SK-N-SH (cell line): ENCODE measurements at regions of chr12 and their contacts with region 1.

Region 1: GRCh38 chr12:66269757-66270383 is 32.4 kb upstream of the HELB start:
- DNase-seq: peak; percentile 45
- H3K4me3 ChIP-seq: no peak overlapping the region
- H3K27ac ChIP-seq: no peak overlapping the region
- H3K4me1 ChIP-seq: no peaks in the 10 kb centered on the region; a peak in 1 of 4 replicates
- H3K27me3 ChIP-seq: no peaks in the 10 kb centered on the region; the same call in 1 of the 2 replicates
- CTCF ChIP-seq: peak; percentile 82
- EP300 ChIP-seq: no peak
- RAD21 ChIP-seq: peak; percentile 74

Region 2: DNA sequence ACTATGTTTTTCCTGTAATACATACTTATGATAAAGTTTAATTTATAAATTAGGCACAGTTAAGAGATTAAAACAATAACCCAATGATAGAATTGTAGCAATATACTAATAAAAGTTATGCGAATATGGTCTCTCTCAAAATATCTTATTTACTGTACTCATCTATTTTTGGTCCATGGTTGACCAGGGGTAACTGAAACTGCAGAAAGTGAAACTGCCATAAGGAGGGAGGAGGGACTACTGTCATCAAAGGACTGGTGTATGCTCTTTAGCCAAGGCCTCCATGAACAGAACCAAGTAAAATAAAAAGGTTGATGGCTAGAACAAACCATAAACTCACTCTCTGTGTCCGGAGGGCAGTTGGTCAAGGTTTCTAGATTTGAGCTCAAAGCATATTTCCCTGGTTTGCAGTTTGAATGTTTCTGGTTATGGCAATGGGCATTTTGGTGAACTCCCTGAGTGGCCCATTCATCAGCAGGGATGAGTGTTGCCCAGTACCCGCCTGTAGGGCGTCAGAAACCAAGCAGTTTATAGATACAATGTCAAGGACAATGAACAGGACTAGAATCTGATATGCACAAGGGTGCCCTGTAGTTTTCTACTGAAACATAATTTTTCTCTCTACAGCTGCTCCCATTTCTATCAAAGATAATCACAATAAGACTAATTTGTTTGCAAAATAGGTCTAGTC is 1080.7 kb before region 1 on chr12:
- CTCF ChIA-PET with region 1: no interaction called
- POLR2A ChIA-PET with region 1: no interaction called
- DNase-seq: no peak
- H3K4me3 ChIP-seq: no peak overlapping the region
- H3K27ac ChIP-seq: no peak overlapping the region
- H3K4me1 ChIP-seq: no peaks in the 10 kb centered on the region; a peak in 1 of 4 replicates
- H3K27me3 ChIP-seq: no peaks in the 10 kb centered on the region
- CTCF ChIP-seq: no peak
- EP300 ChIP-seq: no peak
- RAD21 ChIP-seq: no peak

Region 3: DNA sequence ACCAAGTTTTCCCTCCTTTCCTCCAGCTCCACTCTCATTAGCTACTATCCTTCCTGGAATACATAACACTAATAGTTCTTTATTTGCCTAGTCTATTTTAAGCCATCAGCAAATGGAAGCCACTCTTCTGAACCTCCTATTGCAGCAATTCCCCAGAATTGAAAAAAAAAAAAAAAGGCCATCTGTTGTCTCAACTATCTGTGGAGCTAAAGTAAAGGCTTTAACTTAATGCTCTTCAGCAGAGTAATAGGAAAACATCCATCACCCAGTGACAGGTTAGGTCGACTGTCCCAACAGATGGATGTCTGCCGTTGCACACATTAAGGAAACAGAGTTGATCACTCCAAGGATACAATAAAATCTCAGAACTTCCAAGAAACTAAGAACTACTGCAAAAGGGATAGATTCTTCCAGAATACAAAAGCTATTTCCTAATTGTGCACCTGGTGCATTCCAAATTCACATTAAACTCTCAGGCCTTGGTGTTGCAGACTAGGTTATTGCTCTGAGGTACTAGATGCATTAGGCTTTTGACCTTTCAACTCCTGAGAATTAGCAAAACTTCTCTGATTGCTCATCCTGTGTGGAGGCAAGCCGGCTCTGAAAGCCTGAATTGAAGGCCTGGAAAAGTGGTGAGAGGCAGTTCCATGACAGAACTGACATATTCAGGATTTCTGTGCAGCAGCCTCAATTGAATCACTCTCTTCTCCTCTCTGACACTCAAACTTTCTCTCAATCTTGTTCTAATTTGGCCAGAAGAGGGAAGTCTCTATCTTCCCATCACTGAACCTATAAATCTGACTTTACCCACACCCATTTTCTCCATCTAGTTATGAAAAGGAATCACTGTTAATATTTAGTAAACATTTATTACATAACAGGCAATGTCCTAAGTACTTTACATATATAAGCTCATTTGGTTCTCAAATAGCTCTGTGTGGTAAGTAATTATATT is 683.9 kb before region 1 on chr12:
- CTCF ChIA-PET with region 1: no interaction called
- POLR2A ChIA-PET with region 1: no interaction called
- DNase-seq: no peak
- H3K4me3 ChIP-seq: no peak overlapping the region
- H3K27ac ChIP-seq: peak overlapping the region; percentile 51 to 73; a peak in 3 of 4 replicates
- H3K4me1 ChIP-seq: peaks cover 0 to 22% of the 10 kb centered on the region in 2 experiments; a peak in 1 of 4 replicates
- H3K27me3 ChIP-seq: no peaks in the 10 kb centered on the region
- CTCF ChIP-seq: 0 out of 2 replicates have a peak, but pooled peaks have one; percentile 7
- EP300 ChIP-seq: peak; percentile 9 to 11; a peak in 1 of 4 replicates
- RAD21 ChIP-seq: no peak

Region 4: DNA sequence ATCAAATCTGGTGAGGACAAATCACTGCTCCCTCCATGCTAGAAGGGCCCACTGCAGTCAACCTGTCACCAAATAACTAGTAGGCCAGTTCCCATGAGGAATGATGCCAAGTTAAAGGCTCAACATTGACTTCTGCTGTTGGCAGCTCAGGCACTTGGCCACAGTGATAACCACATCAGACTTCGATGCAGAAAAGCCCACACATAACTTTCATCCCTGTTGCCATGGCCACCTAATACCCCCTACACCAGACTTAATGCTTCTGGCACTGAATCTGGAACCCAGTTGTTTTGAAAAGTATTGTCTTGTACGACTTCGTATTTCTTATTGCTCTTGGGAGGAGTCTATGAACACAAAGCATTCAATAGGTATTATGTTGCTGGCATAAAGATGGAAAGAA is 11.9 kb before region 1 on chr12:
- CTCF ChIA-PET with region 1: interaction called, 15 read pairs
- POLR2A ChIA-PET with region 1: no interaction called
- DNase-seq: no peak
- H3K4me3 ChIP-seq: no peak overlapping the region
- H3K27ac ChIP-seq: no peak overlapping the region
- H3K4me1 ChIP-seq: no peaks in the 10 kb centered on the region; a peak in 1 of 4 replicates
- H3K27me3 ChIP-seq: peaks cover 9% of the 10 kb centered on the region; the same call in 1 of the 2 replicates
- CTCF ChIP-seq: no peak
- EP300 ChIP-seq: no peak
- RAD21 ChIP-seq: no peak

Region 5: DNA sequence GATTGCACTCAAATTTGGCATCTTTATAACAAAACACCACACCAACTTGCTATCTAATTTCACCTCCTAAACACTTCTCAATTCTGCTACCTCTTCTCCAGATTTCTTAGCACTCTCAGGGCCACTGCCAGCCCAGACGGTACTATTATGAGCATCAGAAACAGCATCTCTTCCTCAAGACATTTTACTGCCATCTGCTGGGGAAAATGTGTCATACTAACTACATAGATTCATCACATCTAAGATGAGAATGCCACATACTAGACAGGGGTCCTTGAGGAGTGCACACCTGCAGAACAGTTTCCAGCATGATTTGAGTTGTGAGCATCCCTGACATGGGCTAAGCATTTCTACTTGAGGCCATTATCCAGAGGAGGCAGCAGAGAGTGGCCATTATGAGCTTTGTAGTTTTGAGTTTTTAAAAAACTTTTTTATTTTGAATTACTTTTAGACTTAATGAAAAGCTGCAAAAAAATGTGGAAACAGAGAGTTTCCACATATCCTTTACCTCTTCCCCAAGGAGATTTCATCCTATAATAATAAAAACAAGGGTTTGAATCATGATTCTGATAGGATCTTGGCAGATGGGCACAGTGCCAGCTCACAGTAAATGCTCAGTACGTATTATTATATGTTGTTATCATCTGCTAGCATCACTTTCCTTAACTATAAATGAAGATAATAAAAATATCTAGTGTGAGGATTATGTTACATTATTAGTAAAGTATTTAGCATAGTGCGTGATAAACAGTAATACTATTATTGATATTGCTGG is 424.2 kb after region 1 on chr12:
- CTCF ChIA-PET with region 1: interaction called, 14 read pairs
- POLR2A ChIA-PET with region 1: no interaction called
- DNase-seq: peak; percentile 15
- H3K4me3 ChIP-seq: no peak overlapping the region
- H3K27ac ChIP-seq: no peak overlapping the region
- H3K4me1 ChIP-seq: no peaks in the 10 kb centered on the region
- H3K27me3 ChIP-seq: peaks cover 14% of the 10 kb centered on the region; the same call in 1 of the 2 replicates
- CTCF ChIP-seq: peak; percentile 75
- EP300 ChIP-seq: no peak
- RAD21 ChIP-seq: peak; percentile 71